ENCODE measurements at regions of chr16 and their contacts with region 1.

Region 1: GRCh38 chr16:21184834-21185233 is 26.4 kb downstream of the LDAF1 start:
- DNase-seq: no peak
- H3K4me3 ChIP-seq: no peak overlapping the region
- H3K27ac ChIP-seq: no peak overlapping the region
- H3K4me1 ChIP-seq: peaks cover 7 to 9% of the 10 kb centered on the region in 2 donors
- H3K27me3 ChIP-seq: no peaks in the 10 kb centered on the region
- CTCF ChIP-seq: no peak
- POLR2A ChIP-seq: no peak

Region 2: DNA sequence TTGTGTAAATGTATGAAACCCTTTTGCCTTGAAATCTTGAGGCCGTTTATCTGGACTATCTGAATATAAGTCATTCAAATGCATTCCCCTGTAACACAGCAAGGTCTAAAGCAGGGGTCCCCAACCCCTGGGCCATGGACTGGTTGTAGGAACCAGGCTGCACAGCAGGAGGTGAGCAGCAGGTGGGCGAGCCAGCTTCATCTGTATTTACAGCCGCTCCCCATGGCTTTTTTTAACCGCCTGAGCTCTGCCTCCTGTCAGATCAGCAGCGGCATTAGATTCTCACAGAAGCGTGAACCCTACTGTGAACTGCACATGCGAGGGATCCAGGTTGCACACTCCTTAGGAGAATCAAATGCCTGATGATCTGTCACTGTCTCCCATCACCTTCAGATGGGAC is 58.3 kb before region 1 on chr16:
- intact Hi-C with region 1: no loop called
- DNase-seq: no peak
- H3K4me3 ChIP-seq: no peak overlapping the region
- H3K27ac ChIP-seq: no peak overlapping the region
- H3K4me1 ChIP-seq: no peaks in the 10 kb centered on the region
- H3K27me3 ChIP-seq: no peaks in the 10 kb centered on the region
- CTCF ChIP-seq: no peak
- POLR2A ChIP-seq: no peak

Region 3: GRCh38 chr16:21244518-21245215 is 59.8 kb after region 1 on chr16:
- intact Hi-C with region 1: no loop called
- DNase-seq: no peak
- H3K4me3 ChIP-seq: no peak overlapping the region
- H3K27ac ChIP-seq: no peak overlapping the region
- H3K4me1 ChIP-seq: no peaks in the 10 kb centered on the region
- H3K27me3 ChIP-seq: no peaks in the 10 kb centered on the region
- CTCF ChIP-seq: no peak
- POLR2A ChIP-seq: no peak

Region 4: DNA sequence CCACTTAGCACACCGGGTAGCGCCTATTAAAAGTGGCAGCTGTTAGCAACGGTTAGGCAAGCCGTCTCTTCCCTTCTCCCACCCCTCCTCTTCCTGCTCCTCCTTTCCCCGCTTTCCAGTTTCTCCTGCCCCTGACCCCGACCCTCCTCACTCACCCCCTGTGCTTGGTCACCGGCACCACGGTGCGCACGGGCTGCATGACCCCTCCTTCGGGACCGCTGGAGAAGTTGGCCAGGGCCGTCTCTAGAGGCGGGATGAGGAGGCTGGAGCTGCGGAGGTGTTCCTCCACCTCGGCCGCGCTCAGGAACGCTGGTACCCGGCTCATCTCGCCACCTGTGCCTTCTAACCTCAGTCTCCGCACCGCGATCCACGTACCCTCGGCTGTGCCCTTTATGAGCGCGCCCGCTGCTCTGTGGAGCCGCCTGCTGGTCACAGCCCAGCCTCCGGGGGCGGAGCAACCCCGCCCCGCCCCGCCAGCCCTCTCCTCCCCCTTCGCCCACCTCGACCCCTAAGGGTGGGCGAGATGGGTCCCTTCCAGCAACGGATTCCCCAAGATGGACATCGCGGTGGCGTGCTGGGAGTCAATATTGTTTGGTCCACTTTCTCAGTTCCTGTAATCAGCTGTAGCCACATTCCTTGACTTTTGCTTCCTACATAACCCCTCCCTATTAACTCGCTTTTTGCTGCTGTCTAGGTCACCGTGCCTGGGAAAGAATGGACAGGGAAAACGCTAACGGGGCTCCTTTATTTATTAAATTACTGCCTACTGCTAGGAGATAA is 93.3 kb after region 1 on chr16 and contains the start of gene CRYM:
- intact Hi-C with region 1: loop called in 1 of 2 experiments (anchors 5 kb)
- DNase-seq: peak in 5 of 7 donors; percentile 46 to 60 (median 53)
- H3K4me3 ChIP-seq: peak within 1 kb of the TSS in 2 of 4 donors; percentile 15 to 54
- H3K27ac ChIP-seq: no peak within 1 kb of the TSS
- H3K4me1 ChIP-seq: peaks cover 3 to 6% of the 10 kb centered on the region in 2 donors
- H3K27me3 ChIP-seq: peaks cover 27% of the 10 kb centered on the region
- CTCF ChIP-seq: peak; percentile 46 to 79 (median 62)
- POLR2A ChIP-seq: no peak
- total RNA-seq, gene CRYM: 0.22 to 0.84 (median 0.42) TPM in 3 of 9 donors, not detected in the others

Region 5: DNA sequence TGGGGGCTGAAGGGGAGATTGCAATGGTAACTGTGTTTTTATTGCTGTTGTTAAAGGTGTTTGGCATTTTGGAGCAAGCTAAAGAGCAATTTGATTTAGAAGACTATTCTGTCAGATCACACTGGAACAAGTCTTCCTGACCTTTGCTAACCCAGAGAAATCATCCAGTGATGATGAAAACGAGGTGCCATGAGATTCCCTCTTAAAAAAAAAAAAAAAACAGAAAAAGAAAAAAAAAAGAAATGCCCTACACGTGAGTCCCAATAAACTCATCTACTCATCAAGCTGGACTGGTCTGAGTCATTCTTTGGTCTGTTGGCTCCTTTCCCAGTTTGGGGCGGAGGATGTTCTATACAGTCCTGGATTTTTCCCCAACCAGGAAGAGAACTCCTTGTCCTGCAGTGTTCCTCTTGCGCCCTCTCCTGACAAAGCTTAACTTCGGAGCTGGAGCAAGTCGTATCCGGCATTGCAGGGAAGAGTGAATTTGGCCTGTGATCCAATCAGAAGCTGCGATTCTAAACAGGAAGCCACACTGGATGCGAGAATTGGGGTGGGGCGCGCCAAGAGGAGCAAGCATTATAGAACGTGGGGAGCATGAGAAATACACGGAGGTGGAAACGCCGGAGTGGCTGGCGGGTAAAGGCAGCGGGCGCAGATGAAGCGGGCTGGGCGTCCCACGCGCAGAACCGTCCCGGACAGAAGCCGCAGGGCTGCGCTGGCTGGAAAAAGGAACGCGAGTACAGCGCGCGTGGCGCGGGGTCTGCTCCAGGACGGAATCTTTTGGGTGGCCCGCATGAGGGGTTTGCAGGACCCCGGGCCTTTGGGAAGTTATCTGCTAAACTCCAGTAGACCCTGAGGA is 115.7 kb after region 1 on chr16:
- intact Hi-C with region 1: loop called (anchors 5 to 10 kb)
- DNase-seq: peak; percentile 97 to 99 (median 98)
- H3K4me3 ChIP-seq: peak overlapping the region; percentile 39 to 73 (median 48)
- H3K27ac ChIP-seq: peak overlapping the region in 4 of 5 donors; percentile 17 to 82 (median 70)
- H3K4me1 ChIP-seq: no peaks in the 10 kb centered on the region
- H3K27me3 ChIP-seq: peaks cover 10% of the 10 kb centered on the region
- CTCF ChIP-seq: peak; percentile 65 to 93 (median 90)
- POLR2A ChIP-seq: peak in 1 of 2 donors; percentile 48

Measured in adrenal gland (tissue), 19 donors.